ENCODE measurements at regions of chr16 and their contacts with region 1.

Region 1: DNA sequence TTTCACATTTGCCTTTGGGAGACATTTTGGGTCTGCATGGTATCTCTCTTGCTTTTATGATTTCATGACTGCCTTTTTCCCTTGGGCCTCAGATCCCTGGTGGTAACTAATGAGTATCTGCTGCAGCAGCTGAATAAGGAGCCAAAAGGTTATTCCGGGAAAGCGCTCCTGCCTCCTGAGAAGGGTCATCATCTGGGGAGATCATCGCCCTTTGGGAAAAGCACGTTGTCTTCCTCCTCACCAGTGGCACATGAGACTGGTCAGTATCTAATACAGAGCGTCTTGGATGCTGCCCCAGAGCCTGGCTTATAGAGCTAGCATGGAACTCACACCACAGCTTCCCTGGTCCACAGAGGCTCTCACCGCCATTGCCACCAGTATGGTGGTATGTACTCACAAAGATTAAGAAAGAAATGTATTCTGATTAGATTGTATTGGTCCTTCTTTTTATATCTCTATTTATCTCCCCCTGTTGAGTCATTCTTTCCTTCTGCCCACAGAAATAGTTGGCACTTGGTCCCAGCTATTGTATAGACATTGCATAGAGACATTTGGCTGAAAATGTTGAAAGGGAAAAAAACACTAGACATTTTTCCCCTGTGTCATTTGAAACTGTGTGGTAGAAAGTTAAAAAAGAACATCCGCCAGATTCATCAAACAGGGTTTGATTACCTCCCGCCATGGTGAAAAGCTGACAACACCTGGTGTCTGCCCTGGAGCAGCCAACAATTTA is 8.4 kb downstream of the TPPP3 start:
- DNase-seq: peak; percentile 10
- ATAC-seq: no peak
- H3K4me3 ChIP-seq: no peak overlapping the region
- H3K27ac ChIP-seq: no peak overlapping the region
- H3K4me1 ChIP-seq: no peaks in the 10 kb centered on the region
- H3K27me3 ChIP-seq: no peaks in the 10 kb centered on the region
- CTCF ChIP-seq: no peak

Region 2: GRCh38 chr16:67339453-67339852 is 45.5 kb before region 1 on chr16:
- CTCF ChIA-PET with region 1: no interaction called
- POLR2A ChIA-PET with region 1: interaction called, 10 read pairs
- intact Hi-C with region 1: loop called (anchors 10 kb)
- DNase-seq: peak; percentile 31
- ATAC-seq: peak; percentile 51
- H3K4me3 ChIP-seq: no peak overlapping the region
- H3K27ac ChIP-seq: no peak overlapping the region
- H3K4me1 ChIP-seq: no peaks in the 10 kb centered on the region; the same call in 1 of the 2 replicates
- H3K27me3 ChIP-seq: no peaks in the 10 kb centered on the region
- CTCF ChIP-seq: peak; percentile 45

Region 3: GRCh38 chr16:67447508-67448076 is 62.6 kb after region 1 on chr16:
- CTCF ChIA-PET with region 1: no interaction called
- POLR2A ChIA-PET with region 1: no interaction called
- intact Hi-C with region 1: no loop called
- DNase-seq: peak; percentile 46
- ATAC-seq: peak; percentile 48; the same call in 1 of the 2 replicates
- H3K4me3 ChIP-seq: no peak overlapping the region
- H3K27ac ChIP-seq: no peak overlapping the region
- H3K4me1 ChIP-seq: no peaks in the 10 kb centered on the region
- H3K27me3 ChIP-seq: no peaks in the 10 kb centered on the region
- CTCF ChIP-seq: peak; percentile 57

Measured in PC-3 (cell line).